Activated CD8-positive, alpha-beta T cell treated with anti-CD3 and anti-CD28 coated beads for 36 hours (primary cell): ENCODE measurements at regions of chr2 and their contacts with region 1.

Region 1: GRCh38 chr2:170235860-170236679 is 58.1 kb downstream of the MYO3B start:
- DNase-seq: peak; percentile 46
- ATAC-seq: peak; percentile 78
- H3K4me3 Mint-ChIP-seq: no peak overlapping the region
- H3K27ac Mint-ChIP-seq: no peak overlapping the region
- H3K4me1 Mint-ChIP-seq: no peaks in the 10 kb centered on the region
- H3K27me3 Mint-ChIP-seq: peaks cover 13% of the 10 kb centered on the region
- CTCF ChIP-seq: peak; percentile 72

Region 2: DNA sequence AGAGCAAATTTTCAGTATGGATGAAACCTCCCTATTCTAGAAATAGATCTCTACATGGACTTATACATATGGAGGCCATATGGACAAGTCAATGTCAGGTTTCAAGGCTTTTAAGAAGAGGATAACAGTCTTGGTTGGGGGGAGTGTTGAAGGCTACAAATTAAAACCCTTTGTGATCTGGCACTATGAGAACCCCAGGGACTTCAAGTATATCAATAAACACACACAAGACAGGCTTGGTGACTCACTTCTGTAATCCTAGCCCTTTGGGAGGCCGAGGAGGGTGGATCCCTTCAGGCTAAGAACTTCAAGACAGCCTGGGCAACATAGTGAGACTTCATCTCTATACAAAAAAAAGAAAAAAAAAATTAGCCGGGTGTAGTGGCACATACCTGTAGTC is 351.9 kb after region 1 on chr2:
- CTCF ChIA-PET with region 1: no interaction called
- POLR2A ChIA-PET with region 1: no interaction called
- intact Hi-C with region 1: loop called (anchors 10 kb)
- DNase-seq: no peak
- ATAC-seq: no peak
- H3K4me3 Mint-ChIP-seq: no peak overlapping the region
- H3K27ac Mint-ChIP-seq: no peak overlapping the region
- H3K4me1 Mint-ChIP-seq: no peaks in the 10 kb centered on the region
- H3K27me3 Mint-ChIP-seq: peaks cover 9% of the 10 kb centered on the region
- CTCF ChIP-seq: no peak